ENCODE measurements at regions of chr15 and their contacts with region 1.

Region 1: GRCh38 chr15:68053701-68054627 is at the start of gene PIAS1:
- DNase-seq: peak; percentile 80 to 97
- H3K4me3 ChIP-seq: peak within 1 kb of the TSS; percentile 79 to 99
- H3K27ac ChIP-seq: peak within 1 kb of the TSS; percentile 83 to 92
- H3K4me1 ChIP-seq: peaks cover 0 to 6% of the 10 kb centered on the region in 2 donors
- H3K27me3 ChIP-seq: no peaks in the 10 kb centered on the region
- CTCF ChIP-seq: peak in 1 of 3 experiments; percentile 48
- total RNA-seq, gene PIAS1: 17.1 TPM

Region 2: DNA sequence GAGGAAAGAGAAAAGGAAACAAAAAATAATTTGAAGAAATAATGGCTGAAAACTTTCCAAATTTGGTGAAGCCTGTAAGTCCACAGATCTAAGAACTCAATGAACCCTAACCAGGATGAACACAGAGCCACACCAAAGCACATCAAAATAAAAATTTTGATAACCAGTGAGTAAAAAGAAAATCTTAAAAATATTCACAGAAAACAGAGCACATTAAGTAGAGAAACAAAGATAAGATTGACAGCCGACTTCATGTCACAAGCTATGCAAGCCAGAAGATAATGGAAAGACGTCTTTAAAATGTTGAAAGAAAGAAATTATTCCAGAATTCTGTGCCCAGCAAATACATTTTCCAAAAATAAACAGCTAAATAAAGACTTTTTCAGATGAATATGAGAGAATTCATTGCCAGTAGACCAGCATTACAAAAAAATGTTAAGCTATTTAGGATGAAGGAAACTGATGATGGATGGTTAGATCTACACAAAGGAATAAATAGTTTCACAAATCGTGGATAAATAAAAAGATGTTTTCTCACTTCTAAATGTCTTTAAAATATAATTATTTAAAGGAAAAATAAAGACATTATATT is 368.9 kb before region 1 on chr15:
- intact Hi-C with region 1: no loop called
- DNase-seq: no peak
- H3K4me3 ChIP-seq: no peak overlapping the region
- H3K27ac ChIP-seq: no peak overlapping the region
- H3K4me1 ChIP-seq: no peaks in the 10 kb centered on the region
- H3K27me3 ChIP-seq: no peaks in the 10 kb centered on the region
- CTCF ChIP-seq: no peak

Region 3: GRCh38 chr15:67967871-67968431 is 86.0 kb before region 1 on chr15:
- intact Hi-C with region 1: loop called (anchors 10 kb)
- DNase-seq: peak in 1 of 2 donors; percentile 89
- H3K4me3 ChIP-seq: peak overlapping the region; percentile 41 to 59
- H3K27ac ChIP-seq: peak overlapping the region in 1 of 2 donors; percentile 45
- H3K4me1 ChIP-seq: no peaks in the 10 kb centered on the region
- H3K27me3 ChIP-seq: no peaks in the 10 kb centered on the region
- CTCF ChIP-seq: no peak

Region 4: DNA sequence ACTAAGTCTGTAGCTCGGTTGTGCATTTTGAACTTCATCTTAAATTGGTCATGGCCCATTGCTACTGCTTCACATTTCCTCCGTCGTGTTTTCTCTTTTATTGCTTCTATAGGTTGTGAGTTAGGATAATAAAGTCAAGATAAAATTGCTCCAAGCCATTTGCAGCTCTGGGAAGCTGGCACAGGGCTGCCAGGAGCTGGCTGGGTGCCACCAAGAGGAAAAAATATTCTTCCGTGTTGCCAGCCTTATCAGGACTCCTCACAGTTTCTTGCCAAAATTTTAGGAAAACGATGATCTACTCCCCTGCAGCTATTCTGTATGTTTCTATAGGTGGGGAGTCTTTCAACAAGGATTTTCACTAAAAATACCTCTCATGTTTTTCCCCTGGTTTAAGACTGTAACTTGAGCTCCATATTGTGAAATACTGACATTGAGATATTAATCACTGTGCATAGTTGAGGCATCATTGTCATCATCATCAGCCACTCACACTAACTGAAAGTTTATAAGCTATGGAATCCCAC is 55.3 kb before region 1 on chr15:
- intact Hi-C with region 1: no loop called
- DNase-seq: no peak
- H3K4me3 ChIP-seq: no peak overlapping the region
- H3K27ac ChIP-seq: no peak overlapping the region
- H3K4me1 ChIP-seq: peaks cover 0 to 7% of the 10 kb centered on the region in 2 donors
- H3K27me3 ChIP-seq: no peaks in the 10 kb centered on the region
- CTCF ChIP-seq: no peak

Region 5: DNA sequence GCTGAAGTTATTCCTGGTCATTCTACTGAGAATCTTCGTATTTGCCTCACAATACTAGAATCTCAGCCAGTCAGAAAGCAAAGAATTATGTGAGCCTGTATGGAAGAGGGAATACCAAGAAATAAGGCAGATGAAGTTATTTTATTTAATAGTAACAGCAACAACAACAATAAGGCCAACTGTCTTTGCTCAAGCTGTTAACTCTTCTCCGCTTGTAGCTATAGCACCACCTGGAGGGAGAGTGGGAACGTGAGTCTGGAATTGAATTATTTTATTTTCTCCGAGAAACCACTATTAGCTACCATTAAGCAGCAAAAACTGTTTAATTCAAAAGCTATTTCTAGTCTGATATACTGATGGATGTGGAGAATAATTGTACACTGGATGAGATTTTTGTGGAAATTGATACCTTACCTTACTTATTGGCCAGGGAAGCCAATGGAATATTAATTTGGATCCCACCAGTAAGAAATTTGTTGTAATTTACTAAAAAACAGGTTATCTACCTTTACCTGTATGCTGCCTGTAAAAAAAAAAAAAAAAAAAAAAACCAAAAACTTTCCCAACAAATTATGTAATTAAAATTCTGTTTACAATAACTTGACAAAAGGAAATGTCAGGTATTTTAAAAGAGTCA is 101.1 kb after region 1 on chr15:
- intact Hi-C with region 1: loop called (anchors 5 kb)
- DNase-seq: no peak
- H3K4me3 ChIP-seq: no peak overlapping the region
- H3K27ac ChIP-seq: no peak overlapping the region
- H3K4me1 ChIP-seq: peaks cover 0 to 18% of the 10 kb centered on the region in 2 donors
- H3K27me3 ChIP-seq: no peaks in the 10 kb centered on the region
- CTCF ChIP-seq: peak; percentile 32 to 78 (median 74)

Region 6: DNA sequence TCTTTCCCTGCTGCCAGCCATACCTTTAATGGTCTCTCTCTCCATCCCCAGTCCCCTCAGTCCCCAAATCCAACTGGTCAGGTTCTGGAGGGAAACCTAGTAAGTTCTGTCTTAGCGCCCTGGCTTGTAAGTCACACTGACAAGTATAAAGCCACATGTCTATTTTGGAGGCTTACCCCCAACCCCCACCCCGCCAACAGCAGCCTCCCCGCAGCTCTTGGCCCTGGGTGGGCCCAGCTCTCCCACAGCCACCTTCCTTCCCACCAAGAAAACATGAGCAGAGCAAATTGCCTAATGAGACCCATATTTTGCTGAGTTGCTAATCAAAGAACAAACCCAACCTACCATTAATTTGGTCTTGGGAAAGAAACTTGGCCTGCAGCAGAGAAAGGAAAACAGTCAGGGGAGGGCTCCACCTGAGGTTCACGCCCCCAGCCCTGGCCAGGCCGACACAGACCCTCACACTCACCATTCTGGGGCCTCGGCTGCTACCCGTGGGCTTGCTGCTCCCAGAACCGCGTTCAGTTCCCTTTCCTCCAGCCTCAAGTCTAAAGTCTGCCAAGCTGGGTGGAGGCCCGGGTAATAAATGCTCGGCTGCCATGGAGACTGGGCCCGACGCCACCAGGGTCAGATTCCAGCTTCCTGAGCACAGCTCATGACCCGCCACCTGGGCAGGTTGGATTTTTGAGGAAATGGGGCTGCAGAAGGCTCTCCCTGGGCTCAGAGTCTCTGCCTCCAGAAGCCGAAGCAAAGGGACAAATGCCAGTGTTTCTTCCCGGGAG is 151.0 kb after region 1 on chr15 and contains the start of gene CALML4:
- intact Hi-C with region 1: loop called (anchors 5 kb)
- DNase-seq: peak in 1 of 2 donors; percentile 75
- H3K4me3 ChIP-seq: peak within 1 kb of the TSS; percentile 31 to 37
- H3K27ac ChIP-seq: no peak within 1 kb of the TSS
- H3K4me1 ChIP-seq: peaks cover 6 to 14% of the 10 kb centered on the region in 2 donors
- H3K27me3 ChIP-seq: no peaks in the 10 kb centered on the region
- CTCF ChIP-seq: no peak
- total RNA-seq, gene CALML4: 0.85 TPM

Measured in ascending aorta (tissue), 2 donors.